Astrocyte of the cerebellum (primary cell): ENCODE measurements at regions of chr9 and their contacts with region 1.

Region 1: GRCh38 chr9:72997387-72997995 is 44.6 kb upstream of the ALDH1A1 start:
- DNase-seq: no peak
- H3K4me3 ChIP-seq: no peak overlapping the region
- CTCF ChIP-seq: no peak

Region 2: DNA sequence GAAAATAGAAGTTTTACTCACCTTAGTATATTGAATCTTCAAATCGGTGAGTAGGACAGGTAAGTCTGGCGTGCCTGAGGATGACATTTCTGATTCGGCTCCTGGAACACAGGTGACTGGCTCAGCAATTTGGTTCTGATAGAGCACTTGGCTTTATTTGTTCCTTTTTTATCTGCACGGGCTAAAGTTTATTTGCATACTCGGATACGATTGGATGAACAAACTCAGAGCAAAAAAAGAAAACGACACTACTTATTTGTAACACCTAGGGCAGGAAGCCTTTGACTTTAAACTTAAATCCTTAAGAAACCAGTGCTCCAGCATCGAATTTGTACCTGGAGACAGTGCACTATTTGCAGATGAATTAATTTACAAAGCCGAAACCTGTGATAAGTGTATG is 44.6 kb before region 1 on chr9 and contains the start of gene ALDH1A1:
- in situ Hi-C with region 1: loop called (anchors 5 kb)
- DNase-seq: no peak
- H3K4me3 ChIP-seq: no peak within 1 kb of the TSS
- CTCF ChIP-seq: no peak